ENCODE measurements at regions of chr9 and their contacts with region 1.

Region 1: DNA sequence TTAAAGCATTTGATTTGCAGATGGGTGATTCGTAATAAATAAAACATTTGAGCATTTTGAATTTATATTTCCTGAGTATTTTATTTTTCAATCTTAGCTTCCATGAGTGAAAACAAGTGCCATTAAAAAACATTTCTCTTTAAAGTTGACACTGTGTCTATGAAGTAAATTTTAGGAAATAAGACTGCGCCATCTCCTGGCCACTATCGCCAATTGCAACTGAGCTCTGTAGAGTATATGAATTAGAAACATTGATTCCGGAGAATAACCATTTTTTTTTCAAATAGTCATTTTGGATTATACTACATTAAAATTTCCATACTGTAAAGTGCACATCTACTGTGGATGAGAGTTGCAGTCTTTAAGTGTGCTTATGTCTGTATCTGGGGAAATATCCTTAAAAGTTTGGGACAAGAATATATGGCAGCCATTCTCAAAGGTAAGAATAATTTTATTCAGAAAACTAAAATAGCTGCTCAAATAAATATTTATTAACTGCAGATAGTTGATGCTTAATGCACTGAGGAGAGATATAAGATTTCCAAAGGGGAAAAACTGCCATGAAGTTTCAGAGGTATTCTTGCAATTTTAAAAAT is 5.9 kb downstream of the DMRTA1 start:
- DNase-seq: no peak
- H3K4me3 Mint-ChIP-seq: no peak overlapping the region
- H3K27ac Mint-ChIP-seq: no peak overlapping the region
- H3K4me1 Mint-ChIP-seq: no peaks in the 10 kb centered on the region
- H3K27me3 Mint-ChIP-seq: peaks cover 24% of the 10 kb centered on the region

Region 2: DNA sequence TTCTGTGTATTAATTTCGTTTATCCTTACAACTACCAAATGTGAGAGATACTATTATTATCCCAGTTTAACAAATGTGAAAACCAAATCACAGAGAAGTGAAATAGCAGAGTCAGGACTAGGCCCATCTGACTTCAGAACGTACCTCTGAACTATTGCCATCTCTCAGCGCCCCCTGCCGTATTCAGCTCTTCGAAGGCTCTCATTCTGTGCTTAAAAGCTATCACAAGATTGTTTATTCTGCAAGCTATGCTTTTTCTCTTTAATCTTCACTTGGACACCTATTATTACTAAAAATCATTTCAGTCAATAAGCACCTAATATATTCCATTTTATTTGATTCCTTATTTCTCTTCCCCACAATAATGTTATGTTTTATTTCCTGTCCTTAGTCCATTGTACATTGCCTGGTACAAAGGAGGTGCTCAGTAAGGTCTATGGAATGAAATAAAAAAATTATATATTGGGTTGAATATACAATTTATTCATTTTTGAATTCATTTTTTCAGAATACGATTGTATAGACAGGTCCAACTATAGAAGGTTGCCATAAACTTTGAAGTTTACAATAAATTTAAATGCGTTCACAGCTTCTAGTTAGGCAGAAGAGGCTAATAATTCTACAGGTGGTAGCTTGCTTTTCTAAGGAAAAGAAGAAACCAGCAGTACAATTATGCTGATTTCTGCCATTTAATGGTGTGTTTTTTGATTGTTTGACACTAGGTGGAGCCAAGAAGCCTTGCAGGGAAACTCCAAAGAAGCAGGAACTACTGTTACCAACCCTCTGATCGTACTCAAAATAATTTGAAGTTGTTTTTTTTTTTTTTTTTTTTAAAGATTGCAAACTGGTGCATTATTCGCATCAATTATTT is 208.1 kb before region 1 on chr9:
- intact Hi-C with region 1: loop called (anchors 1 kb)
- DNase-seq: no peak
- H3K4me3 Mint-ChIP-seq: no peak overlapping the region
- H3K27ac Mint-ChIP-seq: no peak overlapping the region
- H3K4me1 Mint-ChIP-seq: peaks cover 28% of the 10 kb centered on the region
- H3K27me3 Mint-ChIP-seq: peaks cover 61% of the 10 kb centered on the region

Region 3: GRCh38 chr9:22307013-22307711 is 145.4 kb before region 1 on chr9:
- intact Hi-C with region 1: loop called (anchors 1 kb)
- DNase-seq: no peak
- H3K4me3 Mint-ChIP-seq: no peak overlapping the region
- H3K27ac Mint-ChIP-seq: no peak overlapping the region
- H3K4me1 Mint-ChIP-seq: no peaks in the 10 kb centered on the region
- H3K27me3 Mint-ChIP-seq: peaks cover 9% of the 10 kb centered on the region